ENCODE measurements at regions of chr10 and their contacts with region 1.

Region 1: DNA sequence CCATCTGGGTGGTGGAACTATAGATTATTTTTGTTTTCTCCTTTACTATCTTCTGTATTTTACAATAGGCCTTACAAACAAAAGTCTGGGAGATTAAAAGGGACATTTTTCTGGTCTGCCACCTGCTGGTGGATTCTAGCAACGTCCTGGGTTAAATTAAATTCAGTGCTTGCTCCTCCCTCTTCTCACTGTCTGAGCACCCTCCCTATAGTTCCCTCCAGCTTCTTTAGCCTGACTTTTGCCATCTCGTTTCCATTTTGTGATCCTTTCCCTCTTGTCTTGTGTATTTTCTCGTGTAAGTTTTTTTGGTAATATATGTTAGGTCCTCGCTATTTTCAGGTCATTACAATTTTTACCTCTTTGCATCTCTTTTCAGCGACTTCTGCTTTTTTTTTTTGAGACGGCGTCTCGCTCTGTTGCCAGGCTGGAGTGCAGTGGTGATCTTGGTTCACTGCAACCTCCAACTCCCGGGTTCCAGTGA is 16.1 kb downstream of the ANKRD16 start:
- DNase-seq: no peak

Region 2: GRCh38 chr10:5813287-5814109 is 60.1 kb before region 1 on chr10 and contains the start of gene GDI2:
- intact Hi-C with region 1: loop called (anchors 5 to 10 kb)
- DNase-seq: peak; percentile 99
- total RNA-seq, gene GDI2: 151 to 153 TPM

Region 3: GRCh38 chr10:5889624-5890451 is 16.3 kb after region 1 on chr10 and contains the starts of genes ANKRD16 and FBH1:
- intact Hi-C with region 1: no loop called
- DNase-seq: peak; percentile 99
- total RNA-seq, gene ANKRD16: 3.6 to 4.5 TPM
- total RNA-seq, gene FBH1: 75.1 to 78.6 TPM

Measured in posterior vena cava (tissue), 2 donors.